ENCODE measurements at regions of chr19 and their contacts with region 1.

Region 1: GRCh38 chr19:17482877-17483604 is 12.7 kb downstream of the SLC27A1 start:
- DNase-seq: no peak
- H3K4me3 ChIP-seq: no peak overlapping the region
- H3K27ac ChIP-seq: no peak overlapping the region
- H3K4me1 ChIP-seq: peaks cover 7% of the 10 kb centered on the region
- H3K27me3 ChIP-seq: no peaks in the 10 kb centered on the region
- CTCF ChIP-seq: no peak

Region 2: GRCh38 chr19:17496337-17496997 is 13.4 kb after region 1 on chr19:
- CTCF ChIA-PET with region 1: interaction called, 10 read pairs
- POLR2A ChIA-PET with region 1: interaction called, 4 read pairs
- intact Hi-C with region 1: no loop called
- DNase-seq: peak; percentile 63 to 70
- H3K4me3 ChIP-seq: no peak overlapping the region
- H3K27ac ChIP-seq: no peak overlapping the region
- H3K4me1 ChIP-seq: no peaks in the 10 kb centered on the region
- H3K27me3 ChIP-seq: no peaks in the 10 kb centered on the region
- CTCF ChIP-seq: peak; percentile 96

Region 3: DNA sequence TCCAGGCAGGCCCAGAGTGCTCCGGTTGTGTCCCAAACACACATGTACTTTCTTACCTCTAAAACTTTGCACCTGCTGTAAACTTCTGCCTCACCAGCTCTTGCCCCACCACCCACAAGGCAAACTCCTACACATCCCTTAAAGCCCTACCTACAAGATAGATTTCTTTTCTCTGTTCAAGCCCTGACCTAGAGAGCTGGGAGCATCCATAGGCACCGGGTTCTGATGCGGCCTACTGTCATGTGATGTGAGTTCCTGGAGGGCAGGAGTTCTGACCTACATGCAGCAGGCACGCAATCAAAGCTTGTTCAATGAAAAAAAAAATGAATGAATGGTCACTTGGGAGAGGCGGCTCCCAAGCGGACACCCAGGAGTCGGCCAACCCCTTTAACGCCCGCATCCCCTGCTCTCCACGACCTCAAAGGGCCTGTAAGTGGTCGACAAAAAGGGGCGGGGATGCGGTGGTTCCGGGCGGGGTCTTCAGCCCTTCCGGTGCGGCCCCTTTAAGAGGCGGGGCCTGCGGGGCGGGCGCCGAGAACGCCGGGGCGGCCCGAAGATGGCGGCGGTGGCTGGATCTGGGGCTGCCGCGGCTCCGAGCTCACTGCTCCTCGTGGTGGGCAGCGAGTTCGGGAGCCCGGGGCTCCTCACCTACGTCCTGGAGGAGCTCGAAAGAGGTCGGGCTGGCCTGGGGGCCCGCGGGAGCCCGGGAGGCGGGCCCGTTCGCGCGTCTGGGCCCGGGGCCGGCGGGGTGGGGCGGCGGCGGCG is 236.1 kb after region 1 on chr19 and contains the start of gene MAP1S:
- CTCF ChIA-PET with region 1: no interaction called
- POLR2A ChIA-PET with region 1: no interaction called
- intact Hi-C with region 1: no loop called
- DNase-seq: peak; percentile 52 to 58
- H3K4me3 ChIP-seq: peak within 1 kb of the TSS; percentile 93
- H3K27ac ChIP-seq: no peak within 1 kb of the TSS
- H3K4me1 ChIP-seq: peaks cover 21% of the 10 kb centered on the region
- H3K27me3 ChIP-seq: no peaks in the 10 kb centered on the region
- CTCF ChIP-seq: no peak
- total RNA-seq, gene MAP1S: 74.6 and 86.9 TPM in 2 replicates

Measured in PC-9 (cell line).